Posterior vena cava (tissue), 2 donors: ENCODE measurements at regions of chr6 and their contacts with region 1.

Region 1: GRCh38 chr6:121430514-121431460 is 4.7 kb upstream of the GJA1 start:
- DNase-seq: no peak

Region 2: DNA sequence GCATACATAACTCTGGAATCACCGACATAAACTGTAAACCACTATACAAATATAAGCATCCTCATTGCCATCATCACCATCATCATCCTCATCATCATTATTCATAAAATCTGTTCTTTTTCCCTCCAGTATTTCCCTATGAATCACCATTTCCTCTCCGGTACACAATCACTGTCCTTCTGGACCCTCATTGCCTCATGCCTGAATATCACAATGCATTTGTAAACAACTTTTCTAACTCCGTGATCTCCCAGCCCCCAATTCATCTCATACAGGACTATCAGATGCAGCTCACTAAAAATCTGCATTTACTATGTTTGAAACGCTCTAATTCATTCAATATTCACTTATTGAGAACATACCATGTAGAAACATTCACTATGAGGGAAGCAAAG is 436.2 kb before region 1 on chr6:
- intact Hi-C with region 1: no loop called
- DNase-seq: no peak

Region 3: GRCh38 chr6:121764493-121764892 is 333.7 kb after region 1 on chr6:
- intact Hi-C with region 1: loop called in 1 of 2 experiments (anchors 10 kb)
- DNase-seq: no peak

Region 4: GRCh38 chr6:121849477-121849876 is 418.7 kb after region 1 on chr6:
- intact Hi-C with region 1: loop called (anchors 5 kb)
- DNase-seq: no peak

Region 5: DNA sequence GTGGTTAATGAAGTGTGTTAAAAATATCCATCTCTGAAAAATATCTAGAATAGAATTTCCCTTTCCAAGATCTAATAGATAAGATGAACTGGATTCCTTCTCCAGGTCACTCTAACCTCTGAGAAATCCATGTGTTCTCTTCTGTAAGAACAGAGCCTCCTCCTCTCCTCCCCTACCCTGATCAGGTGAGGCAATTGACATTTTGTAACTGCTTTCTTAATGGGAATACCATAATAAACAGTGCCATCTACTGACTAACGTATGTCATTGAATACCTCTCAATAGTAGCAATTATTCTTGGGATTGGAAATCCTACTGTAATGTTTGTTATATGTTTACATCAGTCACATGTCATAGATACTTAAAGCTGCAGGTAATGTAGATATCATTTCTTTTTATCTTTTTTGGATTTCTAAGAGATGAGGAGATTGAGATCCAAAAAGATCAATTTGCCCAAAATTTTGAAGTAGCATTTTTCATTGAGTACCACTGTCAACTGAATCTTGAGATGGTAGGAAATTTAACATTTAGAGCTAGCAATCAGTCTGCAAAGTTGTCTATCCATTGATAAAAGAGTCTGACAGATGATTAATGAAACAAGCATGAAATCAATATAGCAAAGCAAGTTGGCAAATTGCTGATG is 602.9 kb after region 1 on chr6:
- intact Hi-C with region 1: loop called in 1 of 2 experiments (anchors 5 kb)
- DNase-seq: no peak

Region 6: GRCh38 chr6:122184401-122184827 is 753.6 kb after region 1 on chr6:
- intact Hi-C with region 1: loop called (anchors 5 to 10 kb)
- DNase-seq: no peak